GM12878 (cell line): ENCODE measurements at regions of chr15 and their contacts with region 1.

Region 1: DNA sequence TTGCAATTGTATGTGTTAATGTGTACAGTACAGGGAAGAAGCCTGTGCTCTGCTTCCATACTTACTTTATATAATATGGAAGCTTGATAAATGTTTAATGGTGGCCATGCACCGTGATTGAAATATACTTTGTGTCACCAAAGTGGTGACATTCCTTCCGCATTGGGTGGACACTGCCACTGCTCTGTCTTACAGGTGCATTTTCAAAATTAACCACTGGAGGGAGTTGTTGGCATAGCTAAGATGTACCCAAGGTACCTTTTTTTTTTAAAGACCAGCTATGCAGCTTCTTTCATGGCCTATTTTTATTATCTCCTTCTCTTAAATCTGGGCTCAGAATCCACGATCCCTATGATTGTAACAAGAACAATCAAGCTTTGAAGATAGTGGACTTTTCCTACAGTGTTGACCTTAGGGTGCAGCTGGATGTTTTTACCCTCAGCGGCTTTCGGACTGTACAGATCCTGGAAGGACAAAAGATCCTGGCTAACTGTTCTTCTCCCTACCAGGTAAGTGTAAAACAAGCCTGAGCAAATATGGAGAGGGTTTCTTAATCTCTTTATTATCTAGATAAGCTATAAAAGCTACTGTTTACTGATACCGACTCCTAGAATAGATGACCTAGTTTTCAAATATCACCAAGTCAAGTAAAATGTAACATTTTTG is 21.6 kb upstream of the PAK6 start:
- DNase-seq: peak; percentile 26
- ATAC-seq: peak; percentile 95
- H3K4me3 ChIP-seq: no peak overlapping the region
- H3K27ac ChIP-seq: no peak overlapping the region
- H3K4me1 ChIP-seq: no peaks in the 10 kb centered on the region
- H3K27me3 ChIP-seq: no peaks in the 10 kb centered on the region
- CTCF ChIP-seq: peak; percentile 72 to 87 (median 82)
- EP300 ChIP-seq: no peak
- POLR2A ChIP-seq: no peak
- RAD21 ChIP-seq: peak; percentile 92

Region 2: DNA sequence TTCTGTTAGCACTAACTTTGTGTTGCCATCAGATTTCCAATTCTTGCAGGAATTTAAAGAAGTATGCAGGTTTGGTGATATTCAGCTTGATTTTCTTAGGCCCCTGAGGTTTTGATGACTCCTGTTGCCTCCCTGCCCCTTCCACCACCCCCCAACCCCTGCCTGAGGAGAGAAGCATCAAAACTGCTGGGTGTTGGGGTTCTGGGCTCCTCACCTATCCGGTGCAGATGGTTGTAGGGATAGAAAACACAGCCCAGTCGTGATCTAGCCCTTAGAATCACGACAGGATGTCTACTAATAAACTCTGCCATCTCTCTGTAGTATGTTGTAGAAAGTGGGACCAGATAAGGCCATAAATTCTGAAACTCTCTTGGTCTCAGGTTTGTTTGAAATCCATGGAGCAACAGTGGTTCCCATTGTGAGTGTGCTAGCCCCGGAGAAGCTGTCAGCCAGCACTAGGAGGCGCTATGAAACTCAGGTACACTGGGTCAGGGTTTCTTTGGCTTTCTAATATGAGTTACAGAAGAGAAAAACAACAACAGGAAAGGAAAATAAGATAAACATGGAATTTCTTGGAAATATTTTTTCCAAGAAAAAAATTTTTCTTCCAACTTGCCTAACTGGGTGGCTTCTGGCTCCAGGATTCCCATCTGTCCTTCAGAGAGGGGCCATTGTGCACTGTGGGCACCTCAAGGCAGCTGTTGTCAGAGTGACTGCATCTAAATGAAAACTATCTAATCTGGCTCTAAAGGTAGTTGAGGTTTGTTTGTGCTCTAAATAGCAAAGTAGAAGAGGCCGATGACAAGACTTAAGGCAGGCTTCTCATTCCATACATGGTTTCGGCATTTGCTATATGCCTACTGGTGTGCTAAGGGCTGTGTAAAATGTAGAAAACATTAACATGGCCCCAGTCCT is 187.1 kb before region 1 on chr15:
- CTCF ChIA-PET with region 1: interaction called, 18 read pairs
- POLR2A ChIA-PET with region 1: no interaction called
- RAD21 ChIA-PET with region 1: interaction called, 5 read pairs
- SMC1A ChIA-PET with region 1: interaction called, 8 read pairs
- in situ Hi-C with region 1: no loop called
- intact Hi-C with region 1: no loop called
- DNase-seq: no peak
- ATAC-seq: peak; percentile 73
- H3K4me3 ChIP-seq: no peak overlapping the region
- H3K27ac ChIP-seq: no peak overlapping the region
- H3K4me1 ChIP-seq: no peaks in the 10 kb centered on the region
- H3K27me3 ChIP-seq: no peaks in the 10 kb centered on the region
- CTCF ChIP-seq: peak; percentile 48 to 72 (median 59); a peak in 5 of 6 replicates
- EP300 ChIP-seq: no peak
- POLR2A ChIP-seq: no peak
- RAD21 ChIP-seq: peak; percentile 52

Region 3: DNA sequence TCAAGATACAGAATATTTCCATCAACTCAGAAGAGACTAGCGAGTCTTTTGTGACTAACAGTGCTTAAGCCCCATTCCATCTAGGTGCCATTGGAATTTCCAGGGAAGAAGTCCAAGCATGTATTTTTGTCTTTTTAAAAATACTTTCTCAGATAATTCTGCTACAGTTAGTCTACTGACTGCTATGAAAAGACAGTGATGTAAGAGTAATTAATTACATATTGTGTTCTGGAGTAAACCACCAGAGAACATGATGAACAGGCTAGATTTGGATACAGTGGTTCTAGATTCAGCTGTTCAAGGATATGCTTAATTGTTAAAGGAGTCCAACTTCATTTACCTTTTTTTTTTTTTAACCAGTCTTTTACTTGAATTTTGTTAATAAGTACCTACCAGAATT is 13.2 kb before region 1 on chr15:
- CTCF ChIA-PET with region 1: interaction called, 20 read pairs
- POLR2A ChIA-PET with region 1: no interaction called
- RAD21 ChIA-PET with region 1: interaction called, 3 read pairs
- SMC1A ChIA-PET with region 1: interaction called, 7 read pairs
- in situ Hi-C with region 1: no loop called
- intact Hi-C with region 1: no loop called
- DNase-seq: no peak
- ATAC-seq: no peak
- H3K4me3 ChIP-seq: no peak overlapping the region
- H3K27ac ChIP-seq: no peak overlapping the region
- H3K4me1 ChIP-seq: no peaks in the 10 kb centered on the region
- H3K27me3 ChIP-seq: no peaks in the 10 kb centered on the region
- CTCF ChIP-seq: no peak
- EP300 ChIP-seq: no peak
- POLR2A ChIP-seq: no peak
- RAD21 ChIP-seq: no peak

Region 4: DNA sequence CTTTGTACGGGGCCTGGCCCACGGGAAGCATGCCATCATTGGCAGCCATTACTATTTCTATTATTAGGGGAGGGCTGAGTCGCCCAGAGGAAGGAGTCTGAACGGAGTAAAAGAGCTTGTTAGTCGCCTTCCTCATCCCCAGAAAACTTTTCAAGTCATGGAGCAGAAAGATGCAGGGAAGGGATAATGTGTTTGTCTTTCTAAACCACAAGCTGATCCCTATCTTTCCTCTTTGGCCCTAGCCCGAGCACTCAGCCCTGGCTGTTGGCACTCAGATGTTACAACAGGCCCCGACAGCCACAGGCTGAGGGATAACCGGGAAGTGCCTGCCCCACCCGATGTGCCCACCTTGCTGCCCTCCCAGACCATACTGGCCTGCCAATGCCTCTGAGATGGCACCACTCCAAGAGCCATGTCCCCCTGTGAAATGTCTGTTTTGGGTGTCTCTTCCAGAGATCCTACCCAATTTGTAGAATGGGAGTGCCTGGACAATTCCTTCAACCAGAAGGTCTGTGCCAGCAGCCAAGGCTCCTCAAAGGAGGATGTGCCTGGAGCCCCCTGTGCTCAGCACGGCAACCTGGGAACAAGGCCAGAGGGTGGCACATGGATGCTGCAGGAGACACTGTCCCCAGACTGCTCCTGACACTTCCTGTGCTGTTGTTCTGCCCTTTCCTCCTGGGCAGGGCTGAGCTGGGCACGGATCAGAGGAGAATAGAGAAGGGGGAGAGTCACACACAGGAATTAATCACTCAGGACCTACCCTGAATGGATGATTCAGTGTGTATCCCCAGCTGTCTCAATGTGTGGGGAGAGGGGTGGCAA is 32.4 kb after region 1 on chr15:
- CTCF ChIA-PET with region 1: interaction called, 10 read pairs
- POLR2A ChIA-PET with region 1: no interaction called
- RAD21 ChIA-PET with region 1: interaction called, 4 read pairs
- SMC1A ChIA-PET with region 1: interaction called, 5 read pairs
- in situ Hi-C with region 1: no loop called
- intact Hi-C with region 1: no loop called
- DNase-seq: no peak
- ATAC-seq: no peak
- H3K4me3 ChIP-seq: no peak overlapping the region
- H3K27ac ChIP-seq: no peak overlapping the region
- H3K4me1 ChIP-seq: no peaks in the 10 kb centered on the region
- H3K27me3 ChIP-seq: peaks cover 0 to 9% of the 10 kb centered on the region in 2 experiments; a peak in 3 of 4 replicates
- CTCF ChIP-seq: no peak
- EP300 ChIP-seq: no peak
- POLR2A ChIP-seq: no peak
- RAD21 ChIP-seq: no peak

Region 5: GRCh38 chr15:40274350-40275274 is 57.3 kb after region 1 on chr15:
- CTCF ChIA-PET with region 1: interaction called, 296 read pairs
- POLR2A ChIA-PET with region 1: interaction called, 6 read pairs
- RAD21 ChIA-PET with region 1: interaction called, 79 read pairs
- SMC1A ChIA-PET with region 1: interaction called, 98 read pairs
- in situ Hi-C with region 1: loop called (anchors 5 kb)
- intact Hi-C with region 1: loop called (anchors 1 kb)
- DNase-seq: peak; percentile 19
- ATAC-seq: peak; percentile 78
- H3K4me3 ChIP-seq: no peak overlapping the region
- H3K27ac ChIP-seq: no peak overlapping the region
- H3K4me1 ChIP-seq: peaks cover 6% of the 10 kb centered on the region
- H3K27me3 ChIP-seq: 0 out of 4 replicates have a peak, but pooled peaks cover 0 to 2% of the 10 kb centered on the region in 2 experiments
- CTCF ChIP-seq: peak; percentile 100; a peak in 5 of 6 replicates
- EP300 ChIP-seq: no peak
- POLR2A ChIP-seq: no peak
- RAD21 ChIP-seq: peak; percentile 98

Region 6: DNA sequence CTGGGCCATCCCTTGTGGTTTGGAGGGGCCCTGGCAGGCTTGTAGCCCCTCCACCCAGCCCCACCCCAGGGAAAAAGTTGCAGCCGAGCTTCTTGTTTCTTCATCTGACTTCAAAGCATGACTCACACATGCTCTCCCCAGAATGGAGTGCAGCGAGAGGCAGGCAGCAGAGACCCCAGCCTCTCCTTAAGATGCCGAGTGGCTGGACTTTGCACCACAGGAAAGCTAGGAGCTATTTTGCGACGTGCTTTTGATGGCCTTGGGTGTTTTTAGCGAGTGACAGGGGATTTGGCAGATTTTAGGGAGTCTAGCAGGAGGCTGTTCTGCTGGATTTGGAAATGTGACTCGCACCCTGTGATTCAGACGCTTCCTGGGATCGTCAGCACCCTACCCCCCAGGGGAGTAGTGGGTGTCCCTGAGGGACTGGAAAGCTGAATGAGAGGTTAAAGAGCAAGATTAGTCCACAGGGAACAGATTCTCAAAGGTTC is 237.7 kb after region 1 on chr15:
- CTCF ChIA-PET with region 1: no interaction called
- POLR2A ChIA-PET with region 1: no interaction called
- RAD21 ChIA-PET with region 1: no interaction called
- SMC1A ChIA-PET with region 1: no interaction called
- in situ Hi-C with region 1: no loop called
- intact Hi-C with region 1: no loop called
- DNase-seq: no peak
- ATAC-seq: no peak
- H3K4me3 ChIP-seq: no peak overlapping the region
- H3K27ac ChIP-seq: no peak overlapping the region
- H3K4me1 ChIP-seq: peaks cover 41% of the 10 kb centered on the region
- H3K27me3 ChIP-seq: no peaks in the 10 kb centered on the region
- CTCF ChIP-seq: no peak
- EP300 ChIP-seq: no peak
- POLR2A ChIP-seq: no peak
- RAD21 ChIP-seq: no peak

Region 7: GRCh38 chr15:40660686-40661085 is 443.4 kb after region 1 on chr15:
- CTCF ChIA-PET with region 1: no interaction called
- POLR2A ChIA-PET with region 1: no interaction called
- RAD21 ChIA-PET with region 1: no interaction called
- SMC1A ChIA-PET with region 1: no interaction called
- in situ Hi-C with region 1: no loop called
- intact Hi-C with region 1: no loop called
- DNase-seq: no peak
- ATAC-seq: no peak
- H3K4me3 ChIP-seq: no peak overlapping the region
- H3K27ac ChIP-seq: no peak overlapping the region
- H3K4me1 ChIP-seq: no peaks in the 10 kb centered on the region
- H3K27me3 ChIP-seq: no peaks in the 10 kb centered on the region
- CTCF ChIP-seq: no peak
- EP300 ChIP-seq: no peak
- POLR2A ChIP-seq: no peak
- RAD21 ChIP-seq: no peak